Pancreas (tissue), 10 donors: ENCODE measurements at regions of chrX and their contacts with region 1.

Region 1: DNA sequence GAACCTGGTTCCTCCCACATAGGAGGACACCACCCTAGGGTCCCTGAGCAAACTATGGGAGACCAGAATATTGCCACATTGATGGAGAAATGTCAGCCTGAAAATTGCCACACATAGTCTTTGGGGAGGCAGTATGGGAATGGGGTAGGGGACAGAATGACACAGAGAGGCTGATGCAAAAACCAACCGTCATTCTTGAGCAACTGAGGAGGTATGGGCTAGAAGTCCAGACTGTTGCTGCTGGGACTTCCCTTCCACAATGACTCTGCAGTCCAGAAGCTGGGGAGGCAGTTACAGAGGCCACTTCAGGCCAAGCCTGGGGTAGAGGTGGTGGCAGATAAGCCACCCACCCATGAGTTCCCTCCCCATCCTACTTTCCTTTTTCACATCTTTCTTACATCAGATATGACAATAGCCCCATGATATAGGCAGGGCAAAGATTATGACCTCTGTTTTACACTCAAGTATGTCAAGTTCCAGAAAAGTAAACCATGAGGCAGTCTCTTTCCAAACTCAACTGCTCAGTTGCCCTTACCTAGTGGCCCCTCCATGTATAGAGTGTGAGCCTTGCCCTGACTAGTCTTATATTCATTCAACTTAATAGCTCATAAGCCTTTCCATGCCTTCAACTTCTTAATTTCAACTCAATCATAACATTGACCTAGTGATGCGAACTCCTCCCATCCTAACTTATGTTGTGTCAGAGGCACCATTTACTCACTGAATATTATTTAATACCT is 41.7 kb downstream of the VSIG4 start:
- DNase-seq: no peak
- ATAC-seq: peak in 2 of 4 donors; percentile 32 to 37
- H3K4me3 ChIP-seq: no peak overlapping the region
- H3K27ac ChIP-seq: no peak overlapping the region
- H3K4me1 ChIP-seq: no peaks in the 10 kb centered on the region
- H3K27me3 ChIP-seq: peaks cover 0 to 7% (median 2%) of the 10 kb centered on the region in 4 donors
- CTCF ChIP-seq: no peak

Region 2: GRCh38 chrX:65581661-65582339 is 416.3 kb before region 1 on chrX:
- intact Hi-C with region 1: loop called in 1 of 3 experiments (anchors 10 kb)
- DNase-seq: peak in 4 of 6 donors; percentile 10 to 68 (median 40)
- ATAC-seq: peak; percentile 77 to 99 (median 96)
- H3K4me3 ChIP-seq: no peak overlapping the region
- H3K27ac ChIP-seq: no peak overlapping the region
- H3K4me1 ChIP-seq: no peaks in the 10 kb centered on the region
- H3K27me3 ChIP-seq: peaks cover 0 to 10% (median 5%) of the 10 kb centered on the region in 4 donors
- CTCF ChIP-seq: peak; percentile 54 to 77 (median 68)